Lower lobe of right lung (tissue), 2 donors: ENCODE measurements at regions of chr5 and their contacts with region 1.

Region 1: DNA sequence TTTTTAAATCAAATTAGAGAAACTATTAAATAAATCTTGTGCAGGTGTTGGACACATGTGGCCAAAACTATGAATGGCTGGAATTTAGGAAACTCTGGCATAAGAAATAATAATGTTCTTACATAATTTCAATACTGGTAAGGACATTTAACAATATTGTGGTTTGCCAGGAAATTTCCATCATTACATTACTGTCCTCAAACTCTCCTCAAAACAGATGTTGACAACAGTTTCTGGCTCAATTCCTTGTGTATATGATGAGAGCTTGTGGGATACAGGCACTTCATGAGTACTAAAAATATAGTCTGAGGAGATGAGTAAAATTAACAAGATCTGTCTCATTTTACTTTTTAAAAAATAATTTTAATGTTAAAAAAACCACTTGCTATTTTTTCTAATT is 27.9 kb downstream of the MCTP1 start:
- DNase-seq: no peak
- ATAC-seq: no peak
- H3K4me3 ChIP-seq: no peak overlapping the region
- H3K27ac ChIP-seq: no peak overlapping the region
- H3K4me1 ChIP-seq: no peaks in the 10 kb centered on the region
- H3K27me3 ChIP-seq: no peaks in the 10 kb centered on the region
- CTCF ChIP-seq: no peak

Region 2: GRCh38 chr5:94802450-94802849 is 454.5 kb before region 1 on chr5:
- intact Hi-C with region 1: no loop called
- DNase-seq: no peak
- ATAC-seq: no peak
- H3K4me3 ChIP-seq: no peak overlapping the region
- H3K27ac ChIP-seq: no peak overlapping the region
- H3K4me1 ChIP-seq: no peaks in the 10 kb centered on the region
- H3K27me3 ChIP-seq: no peaks in the 10 kb centered on the region
- CTCF ChIP-seq: no peak

Region 3: DNA sequence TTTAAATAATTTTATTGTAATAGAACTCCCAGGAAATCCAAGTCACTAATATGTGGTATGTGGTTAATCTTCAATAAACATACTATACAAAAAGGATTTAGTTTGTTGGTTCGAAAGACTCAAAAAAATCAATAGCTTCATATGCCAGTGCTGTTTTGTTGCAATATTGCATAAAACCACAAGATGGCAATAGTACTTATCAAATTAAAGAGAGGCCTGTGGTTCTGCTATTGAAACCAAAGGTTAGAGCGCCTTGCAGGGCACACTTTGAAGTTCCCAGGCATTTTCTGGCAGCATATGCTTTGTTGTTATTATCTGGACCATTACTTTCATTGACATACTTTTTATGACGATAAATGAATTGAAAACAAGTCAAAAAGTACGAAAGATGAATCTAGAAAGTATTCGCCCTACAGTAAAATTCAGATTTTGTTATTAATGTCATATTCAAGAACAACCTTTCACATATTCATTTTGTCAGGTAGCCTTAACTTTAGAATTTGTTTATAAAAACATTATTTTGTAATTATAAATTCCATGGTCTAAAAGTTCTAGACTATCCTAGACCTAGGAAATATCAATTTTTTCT is 288.4 kb before region 1 on chr5:
- intact Hi-C with region 1: loop called (anchors 10 kb)
- DNase-seq: no peak
- ATAC-seq: peak; percentile 79 to 82
- H3K4me3 ChIP-seq: no peak overlapping the region
- H3K27ac ChIP-seq: no peak overlapping the region
- H3K4me1 ChIP-seq: peaks cover 9% of the 10 kb centered on the region
- H3K27me3 ChIP-seq: no peaks in the 10 kb centered on the region
- CTCF ChIP-seq: peak; percentile 74